ENCODE measurements at regions of chr2 and their contacts with region 1.

Region 1: GRCh38 chr2:39568561-39569006 is 97.1 kb upstream of the TMEM178A start:
- DNase-seq: peak; percentile 57 to 89
- H3K4me3 ChIP-seq: peak overlapping the region; percentile 40; the same call in 1 of the 2 replicates
- H3K27ac ChIP-seq: peak overlapping the region; percentile 83
- H3K4me1 ChIP-seq: peaks cover 49% of the 10 kb centered on the region
- H3K27me3 ChIP-seq: no peaks in the 10 kb centered on the region
- CTCF ChIP-seq: no peak

Region 2: GRCh38 chr2:39642051-39642742 is 73.6 kb after region 1 on chr2:
- CTCF ChIA-PET with region 1: no interaction called
- POLR2A ChIA-PET with region 1: no interaction called
- intact Hi-C with region 1: loop called (anchors 1 kb)
- DNase-seq: peak; percentile 76 to 82
- H3K4me3 ChIP-seq: no peak overlapping the region
- H3K27ac ChIP-seq: no peak overlapping the region
- H3K4me1 ChIP-seq: peaks cover 13% of the 10 kb centered on the region
- H3K27me3 ChIP-seq: no peaks in the 10 kb centered on the region
- CTCF ChIP-seq: no peak

Measured in PC-9 (cell line).